Mammary epithelial cell (primary cell): ENCODE measurements at regions of chr22 and their contacts with region 1.

Region 1: DNA sequence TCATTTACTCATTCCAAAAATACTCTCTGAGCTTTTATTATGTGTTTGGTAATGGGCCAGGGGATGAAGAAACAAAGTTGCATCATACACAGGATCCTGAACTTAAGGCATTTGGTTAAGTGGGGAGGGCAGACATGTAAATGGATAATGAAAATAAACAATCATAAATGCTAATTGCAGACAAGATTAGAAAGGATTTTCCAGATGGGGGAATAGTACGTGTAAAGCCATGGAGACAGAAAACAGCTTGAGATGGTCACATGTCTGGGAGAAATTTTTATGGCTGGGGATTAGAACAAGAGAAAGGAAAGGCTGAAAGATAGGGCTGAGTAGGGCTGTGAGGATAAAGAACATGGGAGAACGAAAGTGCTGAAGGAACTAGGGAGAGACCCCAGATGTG is 534.3 kb upstream of the LARGE1 start:
- DNase-seq: no peak
- H3K4me3 ChIP-seq: no peak overlapping the region
- H3K27ac ChIP-seq: no peak overlapping the region
- H3K4me1 ChIP-seq: no peaks in the 10 kb centered on the region
- H3K27me3 ChIP-seq: no peaks in the 10 kb centered on the region
- CTCF ChIP-seq: no peak

Region 2: GRCh38 chr22:34354071-34354817 is 100.4 kb before region 1 on chr22:
- CTCF ChIA-PET with region 1: no interaction called
- dilution Hi-C with region 1: no loop called
- in situ Hi-C with region 1: loop called in 1 of 2 experiments (anchors 25 kb)
- intact Hi-C with region 1: no loop called
- DNase-seq: no peak
- H3K4me3 ChIP-seq: no peak overlapping the region
- H3K27ac ChIP-seq: no peak overlapping the region
- H3K4me1 ChIP-seq: no peaks in the 10 kb centered on the region
- H3K27me3 ChIP-seq: no peaks in the 10 kb centered on the region
- CTCF ChIP-seq: no peak

Region 3: GRCh38 chr22:34534101-34534500 is 79.5 kb after region 1 on chr22:
- CTCF ChIA-PET with region 1: interaction called, 13 read pairs
- dilution Hi-C with region 1: no loop called
- in situ Hi-C with region 1: no loop called
- intact Hi-C with region 1: no loop called
- DNase-seq: no peak
- H3K4me3 ChIP-seq: no peak overlapping the region
- H3K27ac ChIP-seq: no peak overlapping the region
- H3K4me1 ChIP-seq: no peaks in the 10 kb centered on the region
- H3K27me3 ChIP-seq: no peaks in the 10 kb centered on the region
- CTCF ChIP-seq: no peak